Activated CD4-positive, alpha-beta memory T cell treated with anti-CD3 and anti-CD28 coated beads for 36 hours (primary cell): ENCODE measurements at regions of chr17 and their contacts with region 1.

Region 1: GRCh38 chr17:55527540-55528118 is 16.4 kb upstream of the SMIM36 start:
- DNase-seq: peak; percentile 31
- H3K4me3 Mint-ChIP-seq: no peak overlapping the region
- H3K27ac Mint-ChIP-seq: no peak overlapping the region
- H3K4me1 Mint-ChIP-seq: peaks cover 10% of the 10 kb centered on the region
- H3K27me3 Mint-ChIP-seq: peaks cover 4% of the 10 kb centered on the region

Region 2: DNA sequence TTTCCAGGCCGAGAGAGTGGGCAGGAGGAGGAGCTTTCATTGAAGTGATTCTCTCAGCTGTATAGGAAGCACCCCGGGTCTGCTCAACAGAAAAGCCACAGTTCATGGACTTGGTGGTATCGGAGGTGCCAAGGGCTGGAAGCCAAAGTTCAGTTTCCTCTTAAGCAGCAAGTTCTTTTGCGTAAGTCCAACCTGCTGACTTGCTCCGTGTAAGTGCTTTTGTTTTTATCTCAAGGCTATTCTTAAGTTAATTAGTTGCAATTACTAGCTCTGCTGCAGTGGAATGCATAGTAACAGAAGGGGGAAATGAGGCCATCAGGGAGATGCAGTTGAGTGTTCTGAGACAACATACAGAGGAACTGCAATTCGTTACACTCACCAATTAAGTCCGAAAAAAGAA is 61.0 kb before region 1 on chr17:
- CTCF ChIA-PET with region 1: no interaction called
- POLR2A ChIA-PET with region 1: no interaction called
- intact Hi-C with region 1: no loop called
- DNase-seq: no peak
- H3K4me3 Mint-ChIP-seq: no peak overlapping the region
- H3K27ac Mint-ChIP-seq: no peak overlapping the region
- H3K4me1 Mint-ChIP-seq: peaks cover 4% of the 10 kb centered on the region
- H3K27me3 Mint-ChIP-seq: no peaks in the 10 kb centered on the region

Region 3: GRCh38 chr17:55549140-55549539 is 21.5 kb after region 1 on chr17:
- CTCF ChIA-PET with region 1: interaction called, 8 read pairs
- POLR2A ChIA-PET with region 1: no interaction called
- intact Hi-C with region 1: loop called (anchors 2 kb)
- DNase-seq: no peak
- H3K4me3 Mint-ChIP-seq: no peak overlapping the region
- H3K27ac Mint-ChIP-seq: no peak overlapping the region
- H3K4me1 Mint-ChIP-seq: peaks cover 24% of the 10 kb centered on the region
- H3K27me3 Mint-ChIP-seq: peaks cover 2% of the 10 kb centered on the region

Region 4: GRCh38 chr17:55601874-55602364 is 74.3 kb after region 1 on chr17:
- CTCF ChIA-PET with region 1: interaction called, 229 read pairs
- POLR2A ChIA-PET with region 1: interaction called, 4 read pairs
- intact Hi-C with region 1: loop called (anchors 1 kb)
- DNase-seq: peak; percentile 18
- H3K4me3 Mint-ChIP-seq: no peak overlapping the region
- H3K27ac Mint-ChIP-seq: no peak overlapping the region
- H3K4me1 Mint-ChIP-seq: no peaks in the 10 kb centered on the region
- H3K27me3 Mint-ChIP-seq: peaks cover 12% of the 10 kb centered on the region

Region 5: DNA sequence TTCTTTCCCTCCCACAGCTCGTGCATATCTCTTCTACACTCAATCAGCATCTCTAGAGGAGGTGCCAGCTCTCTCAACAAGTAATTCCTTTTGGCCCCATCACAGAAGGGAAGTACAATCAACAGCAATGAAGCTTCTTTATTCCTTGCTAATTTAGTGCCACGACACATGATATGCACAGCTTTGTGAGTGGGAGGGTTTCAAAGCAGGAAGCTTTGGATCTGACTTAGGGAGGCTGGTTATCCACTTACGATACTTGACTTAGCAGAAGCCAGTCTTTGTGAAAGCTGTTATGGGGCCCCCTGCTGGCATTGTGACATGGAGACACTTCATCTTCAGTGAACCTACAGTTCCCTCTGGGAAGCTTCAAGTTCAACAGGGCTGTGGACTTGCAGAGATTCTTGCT is 114.0 kb after region 1 on chr17:
- CTCF ChIA-PET with region 1: interaction called, 39 read pairs
- POLR2A ChIA-PET with region 1: no interaction called
- intact Hi-C with region 1: loop called (anchors 1 kb)
- DNase-seq: peak; percentile 64
- H3K4me3 Mint-ChIP-seq: no peak overlapping the region
- H3K27ac Mint-ChIP-seq: no peak overlapping the region
- H3K4me1 Mint-ChIP-seq: no peaks in the 10 kb centered on the region
- H3K27me3 Mint-ChIP-seq: peaks cover 10% of the 10 kb centered on the region

Region 6: DNA sequence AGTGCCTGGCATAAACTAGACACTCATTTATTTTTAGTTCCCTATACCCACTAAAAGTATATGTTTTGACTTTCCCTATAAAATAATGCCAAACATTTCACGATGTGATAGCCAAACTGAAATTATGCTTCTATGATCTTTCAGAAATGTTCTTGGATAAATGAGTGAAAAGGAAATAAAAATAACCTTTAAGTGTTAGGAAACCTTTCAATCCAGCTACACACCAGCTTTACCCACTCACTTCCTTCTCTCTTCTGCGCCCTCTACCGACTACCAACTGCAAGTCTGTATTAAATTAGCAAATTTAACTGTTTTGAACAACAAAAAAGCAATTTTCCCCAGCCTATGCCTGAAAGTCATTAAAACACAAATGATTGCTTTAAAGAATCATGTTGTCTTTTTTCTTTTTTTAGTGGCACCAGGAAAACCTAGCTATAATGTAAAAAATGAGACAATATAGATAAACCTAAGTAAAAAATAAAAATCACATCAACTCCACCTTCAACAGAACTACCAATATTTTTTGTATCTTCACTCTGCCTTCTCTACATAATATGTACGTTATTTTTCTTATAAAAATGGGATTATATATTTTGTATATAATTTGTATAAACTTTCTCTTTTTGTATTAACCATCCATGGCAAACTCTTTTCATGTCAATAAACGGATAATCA is 208.2 kb after region 1 on chr17:
- CTCF ChIA-PET with region 1: interaction called, 28 read pairs
- POLR2A ChIA-PET with region 1: no interaction called
- intact Hi-C with region 1: no loop called
- DNase-seq: peak; percentile 40
- H3K4me3 Mint-ChIP-seq: no peak overlapping the region
- H3K27ac Mint-ChIP-seq: peak overlapping the region; percentile 10
- H3K4me1 Mint-ChIP-seq: peaks cover 24% of the 10 kb centered on the region
- H3K27me3 Mint-ChIP-seq: peaks cover 41% of the 10 kb centered on the region

Region 7: DNA sequence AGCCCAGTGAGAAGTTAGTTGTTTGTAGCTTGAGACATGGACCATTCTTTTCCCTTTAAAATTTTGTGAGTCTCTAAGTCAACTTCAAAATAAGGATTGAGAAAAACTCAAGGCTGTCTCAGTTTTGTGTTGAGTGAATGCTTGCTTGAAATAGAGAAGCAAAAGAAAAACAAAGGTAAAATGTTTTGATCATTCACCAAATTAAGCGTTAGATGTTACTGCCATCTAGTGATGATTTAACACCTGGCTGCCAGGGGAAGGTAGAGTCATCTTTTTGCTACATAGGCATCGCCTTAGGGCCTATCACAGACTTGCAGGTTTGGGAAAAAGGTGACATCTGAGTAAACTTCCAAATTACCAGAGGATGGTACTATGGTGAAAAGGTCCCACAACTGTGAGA is 297.6 kb after region 1 on chr17:
- CTCF ChIA-PET with region 1: interaction called, 4 read pairs
- POLR2A ChIA-PET with region 1: no interaction called
- intact Hi-C with region 1: loop called (anchors 2 kb)
- DNase-seq: no peak
- H3K4me3 Mint-ChIP-seq: no peak overlapping the region
- H3K27ac Mint-ChIP-seq: no peak overlapping the region
- H3K4me1 Mint-ChIP-seq: no peaks in the 10 kb centered on the region
- H3K27me3 Mint-ChIP-seq: no peaks in the 10 kb centered on the region